ENCODE measurements at regions of chr16 and their contacts with region 1.

Region 1: GRCh38 chr16:22353191-22353919 is 21.1 kb downstream of the CDR2 start:
- DNase-seq: peak in 2 of 9 donors; percentile 36 to 48
- ATAC-seq: peak; percentile 63
- H3K4me3 ChIP-seq: no peak overlapping the region
- H3K4me3 Mint-ChIP-seq: peak overlapping the region; percentile 8 to 62 (median 39)
- H3K27ac ChIP-seq: peak overlapping the region; percentile 48
- H3K27ac Mint-ChIP-seq: peak overlapping the region; percentile 69 to 88 (median 83)
- H3K4me1 ChIP-seq: peaks cover 44 to 52% of the 10 kb centered on the region in 2 donors
- H3K4me1 Mint-ChIP-seq: peaks cover 28 to 70% (median 61%) of the 10 kb centered on the region in 7 donors
- H3K27me3 ChIP-seq: no peaks in the 10 kb centered on the region
- H3K27me3 Mint-ChIP-seq: no peaks in the 10 kb centered on the region

Region 2: DNA sequence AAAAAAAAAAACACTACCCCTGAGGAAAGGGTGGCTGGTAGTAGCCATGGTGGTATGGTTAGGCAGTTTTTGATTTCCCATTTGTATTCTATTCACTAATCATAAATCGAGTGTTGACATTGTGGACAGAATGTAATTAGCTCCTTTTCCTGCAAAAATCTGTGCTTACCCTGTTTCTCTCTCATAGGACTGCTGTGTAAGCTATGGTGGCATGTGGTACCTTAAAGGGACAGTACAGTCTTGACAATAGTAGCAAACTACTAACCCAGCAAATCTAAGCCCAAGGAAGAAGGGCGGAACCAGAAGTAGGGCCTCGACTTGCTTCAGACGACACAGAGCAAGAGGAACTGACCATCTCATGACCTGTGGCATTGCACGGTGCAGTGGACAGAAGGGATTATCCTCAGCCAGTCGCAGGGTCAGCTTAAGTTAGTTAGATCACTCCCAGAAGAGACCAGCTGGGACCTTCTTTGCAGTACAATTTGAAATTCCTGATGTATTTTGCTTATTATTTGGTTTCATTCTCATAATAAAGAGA is 19.8 kb before region 1 on chr16:
- CTCF ChIA-PET with region 1: interaction called, 6 read pairs
- POLR2A ChIA-PET with region 1: interaction called, 6 read pairs
- intact Hi-C with region 1: loop called in 1 of 2 experiments (anchors 2 kb)
- DNase-seq: no peak
- ATAC-seq: no peak
- H3K4me3 ChIP-seq: no peak overlapping the region
- H3K4me3 Mint-ChIP-seq: no peak overlapping the region
- H3K27ac ChIP-seq: no peak overlapping the region
- H3K27ac Mint-ChIP-seq: peak overlapping the region in 5 of 9 donors; percentile 1 to 85 (median 56)
- H3K4me1 ChIP-seq: no peaks in the 10 kb centered on the region
- H3K4me1 Mint-ChIP-seq: peaks cover 6 to 35% (median 16%) of the 10 kb centered on the region in 7 donors
- H3K27me3 ChIP-seq: no peaks in the 10 kb centered on the region
- H3K27me3 Mint-ChIP-seq: no peaks in the 10 kb centered on the region

Region 3: DNA sequence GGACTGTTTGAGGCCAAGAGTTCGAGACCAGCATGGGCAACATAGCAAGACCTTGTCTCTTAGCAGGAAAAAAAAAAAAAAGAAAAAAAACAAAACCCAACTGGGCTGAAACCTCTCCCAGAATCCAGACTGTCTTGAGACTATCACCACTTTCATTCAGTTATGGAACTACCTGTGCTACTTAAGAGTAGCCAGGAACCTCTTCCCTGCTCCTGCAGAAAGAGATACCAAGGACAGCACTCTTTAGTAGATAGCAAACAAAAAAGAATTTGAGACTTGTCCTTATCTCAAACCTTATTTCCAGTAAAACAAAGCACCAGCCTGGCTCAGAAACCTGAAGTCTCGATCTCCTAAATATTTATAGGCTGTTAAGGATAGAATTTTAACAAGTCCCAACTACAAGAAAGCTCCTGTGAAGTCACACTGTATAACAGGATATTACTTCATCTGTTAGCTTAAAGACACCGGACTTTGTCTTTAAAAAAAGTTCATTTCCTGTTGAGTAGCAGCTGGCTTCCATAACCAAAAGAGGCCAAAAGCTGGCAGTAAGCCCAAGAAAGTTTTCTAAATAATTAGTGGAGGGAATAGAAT is 16.0 kb after region 1 on chr16:
- CTCF ChIA-PET with region 1: no interaction called
- POLR2A ChIA-PET with region 1: interaction called, 93 read pairs
- intact Hi-C with region 1: loop called (anchors 1 kb)
- DNase-seq: peak in 5 of 9 donors; percentile 22 to 43 (median 36)
- ATAC-seq: no peak
- H3K4me3 ChIP-seq: no peak overlapping the region
- H3K4me3 Mint-ChIP-seq: peak overlapping the region; percentile 44 to 99 (median 60)
- H3K27ac ChIP-seq: peak overlapping the region; percentile 63
- H3K27ac Mint-ChIP-seq: peak overlapping the region; percentile 36 to 95 (median 83)
- H3K4me1 ChIP-seq: peaks cover 37 to 57% of the 10 kb centered on the region in 2 donors
- H3K4me1 Mint-ChIP-seq: peaks cover 35 to 86% (median 80%) of the 10 kb centered on the region in 7 donors
- H3K27me3 ChIP-seq: no peaks in the 10 kb centered on the region
- H3K27me3 Mint-ChIP-seq: no peaks in the 10 kb centered on the region

Region 4: DNA sequence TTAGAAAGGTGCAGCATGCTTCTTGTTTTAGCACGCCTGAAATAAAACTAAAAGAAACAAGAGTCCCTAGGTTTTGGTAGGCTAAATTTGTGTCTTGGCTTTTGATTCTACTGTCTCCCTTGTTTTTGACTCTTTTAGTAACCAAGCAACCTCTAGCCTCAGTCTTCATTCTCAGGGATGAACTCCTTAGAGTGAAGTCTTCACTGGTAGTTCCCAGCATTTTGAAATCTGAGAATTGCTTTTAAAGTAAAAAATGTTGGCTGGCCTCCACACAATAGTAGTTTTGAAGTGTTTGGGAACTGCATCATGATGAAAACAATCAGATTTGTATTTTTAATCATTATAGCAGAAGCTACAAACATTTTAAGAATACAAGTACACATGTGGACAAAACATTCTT is 27.2 kb after region 1 on chr16:
- CTCF ChIA-PET with region 1: interaction called, 3 read pairs
- POLR2A ChIA-PET with region 1: interaction called, 93 read pairs
- intact Hi-C with region 1: no loop called
- DNase-seq: no peak
- ATAC-seq: no peak
- H3K4me3 ChIP-seq: no peak overlapping the region
- H3K4me3 Mint-ChIP-seq: peak overlapping the region in 7 of 10 donors; percentile 4 to 77 (median 53)
- H3K27ac ChIP-seq: peak overlapping the region; percentile 64
- H3K27ac Mint-ChIP-seq: peak overlapping the region in 8 of 9 donors; percentile 71 to 98 (median 96)
- H3K4me1 ChIP-seq: peaks cover 13 to 31% of the 10 kb centered on the region in 2 donors
- H3K4me1 Mint-ChIP-seq: peaks cover under 1 to 46% (median 33%) of the 10 kb centered on the region in 7 donors
- H3K27me3 ChIP-seq: no peaks in the 10 kb centered on the region
- H3K27me3 Mint-ChIP-seq: peaks cover 0 to under 1% (median 0%) of the 10 kb centered on the region in 5 donors

Measured in naive thymus-derived CD4-positive, alpha-beta T cell (primary cell).